ENCODE measurements at regions of chr7 and their contacts with region 1.

Region 1: GRCh38 chr7:51315393-51316261 is 982 bp downstream of the COBL start:
- DNase-seq: peak; percentile 26 to 48
- ATAC-seq: peak; percentile 58 to 61
- H3K4me3 ChIP-seq: peak overlapping the region; percentile 76 to 91 (median 82)
- H3K27ac ChIP-seq: peak overlapping the region; percentile 81 to 95 (median 92)
- H3K4me1 ChIP-seq: peaks cover 16 to 19% of the 10 kb centered on the region in 2 donors
- H3K27me3 ChIP-seq: no peaks in the 10 kb centered on the region
- CTCF ChIP-seq: no peak
- POLR2A ChIP-seq: peak; percentile 26 to 49

Region 2: GRCh38 chr7:51357821-51358220 is 42.2 kb after region 1 on chr7:
- in situ Hi-C with region 1: no loop called
- intact Hi-C with region 1: loop called (anchors 5 kb)
- DNase-seq: no peak
- ATAC-seq: peak in 1 of 2 donors; percentile 27
- H3K4me3 ChIP-seq: no peak overlapping the region
- H3K27ac ChIP-seq: no peak overlapping the region
- H3K4me1 ChIP-seq: no peaks in the 10 kb centered on the region
- H3K27me3 ChIP-seq: no peaks in the 10 kb centered on the region
- CTCF ChIP-seq: peak; percentile 11 to 40 (median 16)
- POLR2A ChIP-seq: no peak

Region 3: DNA sequence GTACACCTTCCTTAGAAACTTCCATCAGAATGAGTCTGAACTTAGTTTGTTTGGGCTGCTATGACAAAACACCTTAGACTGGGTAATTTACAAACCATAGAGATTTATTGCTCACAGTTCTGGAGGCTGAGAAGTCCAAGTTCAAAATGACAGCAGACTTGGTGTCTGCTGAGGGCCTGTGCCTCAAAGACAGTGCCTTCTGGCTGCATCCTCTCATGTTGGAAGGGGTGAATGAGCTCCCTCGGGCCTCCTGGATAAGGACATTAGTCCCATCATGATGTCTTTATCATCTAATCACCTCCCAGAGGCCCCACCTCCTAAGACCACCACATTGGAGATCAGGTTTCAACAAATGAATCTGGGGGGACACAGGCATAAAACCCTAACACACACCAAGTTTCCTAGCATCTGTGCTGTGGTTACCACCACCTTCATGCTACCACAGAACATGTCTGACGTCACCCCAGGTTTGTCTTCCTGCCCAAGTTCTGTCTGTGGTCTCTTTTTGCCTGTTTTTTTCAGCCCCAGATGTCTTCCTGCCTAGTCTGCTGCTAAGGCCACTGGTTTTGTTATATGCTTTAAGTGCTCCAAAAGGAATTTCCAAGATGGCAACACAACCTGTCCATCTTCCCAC is 151.9 kb after region 1 on chr7:
- in situ Hi-C with region 1: no loop called
- intact Hi-C with region 1: no loop called
- DNase-seq: no peak
- ATAC-seq: no peak
- H3K4me3 ChIP-seq: no peak overlapping the region
- H3K27ac ChIP-seq: no peak overlapping the region
- H3K4me1 ChIP-seq: no peaks in the 10 kb centered on the region
- H3K27me3 ChIP-seq: peaks cover 0 to 9% (median 0%) of the 10 kb centered on the region in 3 donors
- CTCF ChIP-seq: no peak
- POLR2A ChIP-seq: no peak